GM10248 (cell line): ENCODE measurements at regions of chr22 and their contacts with region 1.

Region 1: DNA sequence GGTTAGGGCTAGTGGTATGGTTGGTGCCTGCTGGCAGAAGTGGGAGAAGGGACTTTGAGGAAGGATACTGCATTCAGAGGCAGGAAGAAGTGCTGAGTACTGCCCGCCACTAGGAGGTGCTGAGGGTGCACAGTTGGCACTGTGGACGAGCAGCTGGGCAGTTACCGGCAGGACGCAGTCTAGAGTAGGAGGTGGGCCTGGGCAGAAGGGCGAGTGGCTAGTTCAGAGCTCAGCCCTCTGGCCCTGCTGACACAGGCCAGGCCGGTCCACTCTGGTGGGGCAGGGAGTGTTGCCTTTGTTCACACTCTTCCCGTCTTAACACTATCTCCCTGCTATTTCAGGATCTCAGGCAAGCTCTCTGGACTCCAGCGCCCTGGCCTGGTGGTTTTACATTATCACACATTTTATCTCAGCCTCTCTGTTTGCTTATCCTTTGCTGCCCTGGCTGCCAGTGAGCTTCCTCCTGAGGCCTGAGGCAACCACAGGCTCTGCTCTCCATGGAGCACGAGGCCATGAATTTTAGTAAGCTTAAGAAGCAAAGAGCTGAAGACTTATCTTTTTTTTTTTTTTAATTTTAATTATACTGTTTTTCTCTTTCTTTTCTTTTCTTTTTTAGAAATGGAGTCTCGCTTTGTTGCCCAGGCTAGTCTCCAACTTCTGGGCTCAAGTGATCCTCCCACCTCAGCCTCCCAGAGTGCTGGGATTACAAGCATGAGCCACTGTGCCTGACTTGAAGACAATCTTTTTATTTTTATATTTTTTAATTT is 26.9 kb downstream of the SNAP29 start:
- DNase-seq: peak; percentile 76
- CTCF ChIP-seq: peak; percentile 94

Region 2: DNA sequence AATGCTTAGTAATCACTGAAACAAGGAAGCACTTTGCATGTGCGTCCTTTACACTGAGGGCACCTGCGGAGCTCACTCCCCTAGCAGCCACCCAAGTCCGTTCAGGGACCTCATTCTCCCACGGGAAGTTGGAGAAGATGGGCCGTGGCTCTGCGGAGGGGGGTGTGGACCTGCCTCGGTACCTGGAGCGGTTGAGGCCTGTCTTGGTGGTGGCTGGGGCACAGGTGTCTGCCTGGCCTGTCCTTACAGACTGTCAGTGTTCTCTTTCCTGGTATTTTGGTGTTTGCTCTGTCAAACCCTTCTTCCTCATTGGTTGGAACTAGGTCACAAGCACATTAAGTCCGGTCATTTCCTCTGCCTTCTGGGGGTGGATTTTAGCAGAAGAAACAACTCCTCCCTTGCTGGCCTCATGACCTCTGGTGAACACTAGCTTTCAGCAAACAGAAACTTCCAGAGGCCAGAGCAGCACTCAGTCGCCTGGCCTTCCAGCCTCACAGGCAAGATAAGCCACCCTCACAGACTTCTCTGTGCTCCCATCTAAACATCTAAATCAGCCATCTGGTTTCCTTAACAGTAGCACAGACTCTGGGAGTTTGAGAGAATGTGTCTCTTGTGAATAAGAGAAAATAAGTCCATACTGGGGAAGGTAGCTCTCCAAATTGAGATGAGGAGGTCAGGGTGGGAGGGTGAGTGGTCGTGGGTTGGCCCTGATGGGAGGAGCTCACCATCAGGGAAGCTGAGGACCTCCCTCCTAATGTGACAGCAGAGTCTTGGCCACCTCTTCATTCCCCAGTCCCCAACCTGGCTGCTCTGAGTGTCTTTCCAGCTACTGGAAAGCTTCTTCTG is 18.3 kb before region 1 on chr22:
- CTCF ChIA-PET with region 1: interaction called, 37 read pairs
- POLR2A ChIA-PET with region 1: no interaction called
- DNase-seq: no peak
- CTCF ChIP-seq: no peak

Region 3: GRCh38 chr22:20875296-20875695 is 10.4 kb before region 1 on chr22:
- CTCF ChIA-PET with region 1: interaction called, 37 read pairs
- POLR2A ChIA-PET with region 1: no interaction called
- DNase-seq: no peak
- CTCF ChIP-seq: no peak